ENCODE measurements at regions of chr12 and their contacts with region 1.

Region 1: GRCh38 chr12:32671930-32672780 is 6.9 kb upstream of the DNM1L start:
- DNase-seq: no peak
- H3K4me3 ChIP-seq: no peak overlapping the region
- H3K27ac ChIP-seq: no peak overlapping the region
- H3K4me1 ChIP-seq: peaks cover 3% of the 10 kb centered on the region
- H3K27me3 ChIP-seq: no peaks in the 10 kb centered on the region
- CTCF ChIP-seq: peak; percentile 78

Region 2: GRCh38 chr12:32365473-32366064 is 306.6 kb before region 1 on chr12:
- intact Hi-C with region 1: loop called (anchors 5 kb)
- DNase-seq: peak; percentile 23
- H3K4me3 ChIP-seq: no peak overlapping the region
- H3K27ac ChIP-seq: no peak overlapping the region
- H3K4me1 ChIP-seq: peaks cover 4% of the 10 kb centered on the region
- H3K27me3 ChIP-seq: no peaks in the 10 kb centered on the region
- CTCF ChIP-seq: peak; percentile 90

Measured in left ventricle myocardium inferior (tissue), 1 donor.